ENCODE measurements at regions of chr11 and their contacts with region 1.

Region 1: DNA sequence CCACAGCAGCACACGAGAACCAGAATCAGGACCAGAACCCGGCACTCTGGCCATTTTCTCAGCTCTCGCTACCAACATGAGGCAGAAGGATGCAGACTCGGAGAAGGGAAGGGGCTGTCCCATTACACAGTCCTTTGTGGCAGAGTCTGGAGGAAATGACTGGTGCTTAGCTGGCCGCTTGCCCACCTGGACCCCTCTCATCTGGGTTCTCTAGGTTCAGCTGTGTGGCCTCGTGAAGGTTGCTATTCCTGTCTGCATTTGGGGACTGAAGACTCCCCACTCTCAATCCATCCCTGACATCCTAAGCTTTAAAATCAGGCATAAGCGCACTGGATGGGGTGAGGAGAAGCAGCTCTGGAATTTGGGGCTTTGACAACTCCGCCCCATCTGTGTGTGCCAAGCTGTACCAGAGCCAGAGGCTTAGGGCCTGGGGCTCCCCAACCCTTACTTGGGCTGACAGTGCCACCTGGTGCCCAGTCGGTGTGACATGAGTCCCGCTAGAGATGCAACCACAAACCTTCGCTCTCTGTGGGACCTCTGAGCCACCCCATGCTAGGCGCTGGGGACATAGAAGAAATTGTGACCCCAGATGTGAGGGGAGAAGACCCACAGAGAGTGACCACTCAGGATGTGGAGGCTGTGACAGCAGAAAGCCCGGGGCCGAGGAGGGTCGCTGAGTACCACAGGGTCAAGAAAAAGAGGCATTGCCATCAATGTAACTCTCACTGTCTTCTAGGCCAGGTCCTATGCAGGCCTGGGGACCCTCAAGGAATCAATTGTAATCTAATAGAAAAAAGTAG is 35.9 kb upstream of the FCHSD2 start:
- DNase-seq: peak; percentile 79 to 93 (median 88)
- ATAC-seq: peak; percentile 97
- H3K4me3 ChIP-seq: no peak overlapping the region
- H3K27ac ChIP-seq: peak overlapping the region; percentile 19 to 58
- H3K4me1 ChIP-seq: peaks cover 7 to 27% of the 10 kb centered on the region in 2 donors
- H3K27me3 ChIP-seq: no peaks in the 10 kb centered on the region
- CTCF ChIP-seq: peak; percentile 68 to 80

Region 2: DNA sequence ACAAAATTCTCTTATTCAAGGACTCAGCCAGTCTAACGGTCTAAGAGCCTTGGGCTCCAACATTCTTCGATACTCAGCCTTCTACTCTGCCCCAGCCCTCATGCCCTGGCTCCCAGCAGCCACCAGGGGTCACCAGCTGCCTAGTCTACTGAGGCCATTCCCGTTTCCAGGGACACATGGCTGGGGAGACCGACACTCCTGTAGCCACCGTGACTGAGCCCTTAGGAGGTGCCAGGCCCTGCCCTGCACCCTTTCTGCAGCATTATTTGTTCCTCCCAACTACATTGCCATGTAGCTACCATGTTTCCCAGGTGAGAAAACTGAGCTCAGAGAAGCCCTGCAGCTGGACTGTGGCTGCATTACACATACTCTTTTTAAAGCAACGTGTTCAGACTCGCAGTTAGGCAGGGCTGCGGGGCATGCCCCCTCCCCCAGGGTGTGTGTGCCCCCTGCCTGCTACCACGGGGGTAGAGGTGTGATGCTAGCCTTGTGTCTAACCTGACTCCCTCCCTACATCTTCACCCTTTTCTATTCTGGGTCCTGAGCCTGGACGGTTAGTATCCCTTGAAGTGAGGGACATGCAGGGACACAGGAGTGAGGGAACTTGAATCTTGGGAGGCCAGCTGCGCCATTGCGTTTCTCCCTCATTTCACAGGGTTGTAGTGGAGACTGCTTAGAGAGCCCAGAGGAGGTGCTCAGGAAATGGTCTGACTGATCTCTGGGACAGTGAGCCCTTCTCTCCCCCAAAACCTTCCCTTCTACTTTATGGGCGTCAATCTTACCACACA is 346.3 kb before region 1 on chr11:
- intact Hi-C with region 1: loop called (anchors 5 to 10 kb)
- DNase-seq: peak; percentile 72 to 89 (median 82)
- ATAC-seq: peak; percentile 90
- H3K4me3 ChIP-seq: no peak overlapping the region
- H3K27ac ChIP-seq: peak overlapping the region in 1 of 2 donors; percentile 57
- H3K4me1 ChIP-seq: peaks cover 2 to 77% of the 10 kb centered on the region in 2 donors
- H3K27me3 ChIP-seq: no peaks in the 10 kb centered on the region
- CTCF ChIP-seq: peak; percentile 86 to 92

Region 3: GRCh38 chr11:72924568-72925190 is 253.3 kb before region 1 on chr11:
- intact Hi-C with region 1: loop called in 1 of 2 experiments (anchors 10 kb)
- DNase-seq: peak in 2 of 4 donors; percentile 25 to 45
- ATAC-seq: peak; percentile 83
- H3K4me3 ChIP-seq: no peak overlapping the region
- H3K27ac ChIP-seq: peak overlapping the region in 1 of 2 donors; percentile 15
- H3K4me1 ChIP-seq: peaks cover 4 to 15% of the 10 kb centered on the region in 2 donors
- H3K27me3 ChIP-seq: no peaks in the 10 kb centered on the region
- CTCF ChIP-seq: peak; percentile 35 to 42

Region 4: GRCh38 chr11:73262851-73263495 is 85.0 kb after region 1 on chr11:
- intact Hi-C with region 1: no loop called
- DNase-seq: no peak
- ATAC-seq: no peak
- H3K4me3 ChIP-seq: no peak overlapping the region
- H3K27ac ChIP-seq: no peak overlapping the region
- H3K4me1 ChIP-seq: peaks cover 0 to 16% of the 10 kb centered on the region in 2 donors
- H3K27me3 ChIP-seq: peaks cover 0 to 37% of the 10 kb centered on the region in 2 donors
- CTCF ChIP-seq: no peak